ENCODE measurements at regions of chr1 and their contacts with region 1.

Region 1: DNA sequence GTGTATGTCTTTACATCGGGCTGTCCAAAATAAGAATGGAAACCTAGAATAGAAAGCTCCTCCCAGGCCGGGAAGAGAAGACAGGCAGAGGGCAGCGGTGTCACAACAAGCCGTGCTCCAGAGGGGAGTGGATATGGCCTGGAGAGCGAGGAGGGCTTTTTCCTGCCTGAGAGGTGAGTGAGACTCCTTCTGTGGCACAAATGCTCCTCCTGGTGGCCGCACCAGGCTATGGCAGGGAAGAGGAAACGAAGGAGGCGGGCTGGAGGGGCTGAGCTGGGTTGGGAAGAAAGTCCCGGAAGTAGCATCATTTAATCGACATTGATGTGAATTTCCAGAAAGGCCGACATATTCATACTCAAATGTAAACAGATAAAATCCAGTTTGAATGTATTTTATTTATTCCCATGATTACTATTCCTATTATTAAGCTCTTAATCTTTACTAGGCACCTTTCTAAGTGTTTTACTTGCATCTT is 54.7 kb downstream of the MEF2D start:
- DNase-seq: peak; percentile 88
- H3K4me3 ChIP-seq: peak overlapping the region in 1 of 2 donors; percentile 29
- H3K27ac ChIP-seq: no peak overlapping the region
- H3K4me1 ChIP-seq: no peaks in the 10 kb centered on the region
- H3K27me3 ChIP-seq: no peaks in the 10 kb centered on the region
- CTCF ChIP-seq: peak; percentile 89 to 94 (median 91)
- POLR2A ChIP-seq: no peak

Region 2: GRCh38 chr1:156385534-156386031 is 60.2 kb before region 1 on chr1:
- intact Hi-C with region 1: loop called (anchors 5 kb)
- DNase-seq: peak; percentile 83
- H3K4me3 ChIP-seq: no peak overlapping the region
- H3K27ac ChIP-seq: no peak overlapping the region
- H3K4me1 ChIP-seq: no peaks in the 10 kb centered on the region
- H3K27me3 ChIP-seq: no peaks in the 10 kb centered on the region
- CTCF ChIP-seq: peak; percentile 81 to 93 (median 90)
- POLR2A ChIP-seq: no peak